Endothelial cell of umbilical vein (primary cell): ENCODE measurements at regions of chr10 and their contacts with region 1.

Region 1: DNA sequence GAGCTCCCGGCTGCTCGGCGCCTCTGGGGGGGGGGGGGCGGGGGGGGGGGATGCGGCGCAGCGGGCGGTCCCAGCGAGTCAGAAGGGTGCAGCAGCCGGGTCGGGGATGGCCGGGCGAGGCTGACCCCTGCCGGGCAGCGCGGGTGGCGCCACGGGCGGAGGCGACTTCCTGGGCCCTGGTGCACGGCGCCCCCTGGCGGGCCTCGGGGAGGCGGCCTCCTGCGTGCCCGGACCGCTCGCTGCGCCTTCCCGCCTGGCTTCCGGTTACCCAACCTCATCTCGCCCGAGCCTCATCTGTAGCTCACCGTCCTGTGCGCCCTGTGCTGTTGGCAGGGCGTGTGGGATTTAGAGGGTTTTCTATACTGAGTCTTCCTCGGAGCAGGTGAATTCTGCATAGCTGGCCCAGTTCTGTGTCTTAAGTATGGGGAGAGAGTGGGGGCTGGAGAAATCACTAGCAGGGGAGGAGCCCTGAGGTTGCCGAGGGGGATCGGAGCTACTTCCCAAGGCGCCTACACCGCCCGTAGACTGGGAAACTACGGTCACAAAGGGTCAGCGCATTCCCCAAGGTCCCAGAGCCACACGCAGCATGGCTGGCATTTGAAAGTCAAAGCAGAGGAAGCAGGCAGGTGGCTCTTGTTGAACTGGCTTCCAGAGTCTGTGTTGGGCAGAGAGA is 28.3 kb upstream of the WDFY4 start:
- DNase-seq: peak; percentile 90
- H3K4me3 ChIP-seq: peak overlapping the region in 2 of 3 experiments; percentile 42 to 60
- H3K27ac ChIP-seq: peak overlapping the region; percentile 78
- H3K4me1 ChIP-seq: peaks cover 20% of the 10 kb centered on the region
- H3K27me3 ChIP-seq: peaks cover 0 to 4% of the 10 kb centered on the region in 2 experiments
- CTCF ChIP-seq: peak; percentile 94 to 99
- POLR2A ChIP-seq: no peak

Region 2: GRCh38 chr10:48306265-48306869 is 350.0 kb before region 1 on chr10 and contains the start of gene MAPK8:
- CTCF ChIA-PET with region 1: interaction called, 9 read pairs
- POLR2A ChIA-PET with region 1: no interaction called
- dilution Hi-C with region 1: no loop called
- intact Hi-C with region 1: loop called (anchors 1 kb)
- DNase-seq: peak; percentile 85
- H3K4me3 ChIP-seq: peak within 1 kb of the TSS; percentile 64 to 97 (median 80)
- H3K27ac ChIP-seq: peak within 1 kb of the TSS; percentile 76
- H3K4me1 ChIP-seq: peaks cover 29% of the 10 kb centered on the region
- H3K27me3 ChIP-seq: peaks cover 6% of the 10 kb centered on the region in 2 experiments
- CTCF ChIP-seq: no peak
- POLR2A ChIP-seq: peak; percentile 85
- total RNA-seq, gene MAPK8: 50.1 and 56.2 TPM in 2 replicates

Region 3: GRCh38 chr10:48444266-48444665 is 212.1 kb before region 1 on chr10:
- CTCF ChIA-PET with region 1: interaction called, 67 read pairs
- POLR2A ChIA-PET with region 1: no interaction called
- dilution Hi-C with region 1: no loop called
- intact Hi-C with region 1: loop called (anchors 1 kb)
- DNase-seq: peak; percentile 76
- H3K4me3 ChIP-seq: no peak overlapping the region
- H3K27ac ChIP-seq: no peak overlapping the region
- H3K4me1 ChIP-seq: peaks cover 5% of the 10 kb centered on the region
- H3K27me3 ChIP-seq: no peaks in the 10 kb centered on the region
- CTCF ChIP-seq: peak; percentile 29 to 58
- POLR2A ChIP-seq: no peak

Region 4: GRCh38 chr10:48551861-48552591 is 104.4 kb before region 1 on chr10:
- CTCF ChIA-PET with region 1: interaction called, 445 read pairs
- POLR2A ChIA-PET with region 1: no interaction called
- dilution Hi-C with region 1: no loop called
- intact Hi-C with region 1: loop called (anchors 1 kb)
- DNase-seq: peak; percentile 68
- H3K4me3 ChIP-seq: no peak overlapping the region
- H3K27ac ChIP-seq: peak overlapping the region; percentile 45
- H3K4me1 ChIP-seq: peaks cover 37% of the 10 kb centered on the region
- H3K27me3 ChIP-seq: no peaks in the 10 kb centered on the region
- CTCF ChIP-seq: peak; percentile 66 to 77
- POLR2A ChIP-seq: no peak

Region 5: DNA sequence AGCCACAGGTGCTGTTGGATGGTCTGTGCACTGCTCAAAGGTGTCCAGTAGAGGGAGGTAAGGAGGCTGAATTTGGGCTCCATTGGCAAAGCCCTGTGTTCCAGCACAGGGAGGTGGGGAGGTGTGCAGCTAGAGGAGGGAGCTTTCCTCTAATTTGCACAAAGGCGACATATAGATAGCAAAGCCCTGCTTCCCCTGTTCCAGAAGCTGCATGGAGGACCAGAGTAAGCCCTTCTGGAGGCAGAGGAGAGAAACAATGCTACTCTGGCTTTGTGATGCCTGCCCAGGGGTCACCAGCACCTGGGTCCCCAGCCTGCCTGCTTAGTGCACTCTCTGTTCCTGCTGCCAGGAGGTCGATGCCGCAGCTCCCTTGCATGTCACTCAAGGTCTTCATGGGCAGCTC is 48.1 kb before region 1 on chr10:
- CTCF ChIA-PET with region 1: interaction called, 251 read pairs
- POLR2A ChIA-PET with region 1: no interaction called
- dilution Hi-C with region 1: no loop called
- intact Hi-C with region 1: loop called (anchors 1 kb)
- DNase-seq: no peak
- H3K4me3 ChIP-seq: no peak overlapping the region
- H3K27ac ChIP-seq: peak overlapping the region; percentile 95
- H3K4me1 ChIP-seq: peaks cover 59% of the 10 kb centered on the region
- H3K27me3 ChIP-seq: no peaks in the 10 kb centered on the region
- CTCF ChIP-seq: peak; percentile 74 to 75
- POLR2A ChIP-seq: no peak

Region 6: DNA sequence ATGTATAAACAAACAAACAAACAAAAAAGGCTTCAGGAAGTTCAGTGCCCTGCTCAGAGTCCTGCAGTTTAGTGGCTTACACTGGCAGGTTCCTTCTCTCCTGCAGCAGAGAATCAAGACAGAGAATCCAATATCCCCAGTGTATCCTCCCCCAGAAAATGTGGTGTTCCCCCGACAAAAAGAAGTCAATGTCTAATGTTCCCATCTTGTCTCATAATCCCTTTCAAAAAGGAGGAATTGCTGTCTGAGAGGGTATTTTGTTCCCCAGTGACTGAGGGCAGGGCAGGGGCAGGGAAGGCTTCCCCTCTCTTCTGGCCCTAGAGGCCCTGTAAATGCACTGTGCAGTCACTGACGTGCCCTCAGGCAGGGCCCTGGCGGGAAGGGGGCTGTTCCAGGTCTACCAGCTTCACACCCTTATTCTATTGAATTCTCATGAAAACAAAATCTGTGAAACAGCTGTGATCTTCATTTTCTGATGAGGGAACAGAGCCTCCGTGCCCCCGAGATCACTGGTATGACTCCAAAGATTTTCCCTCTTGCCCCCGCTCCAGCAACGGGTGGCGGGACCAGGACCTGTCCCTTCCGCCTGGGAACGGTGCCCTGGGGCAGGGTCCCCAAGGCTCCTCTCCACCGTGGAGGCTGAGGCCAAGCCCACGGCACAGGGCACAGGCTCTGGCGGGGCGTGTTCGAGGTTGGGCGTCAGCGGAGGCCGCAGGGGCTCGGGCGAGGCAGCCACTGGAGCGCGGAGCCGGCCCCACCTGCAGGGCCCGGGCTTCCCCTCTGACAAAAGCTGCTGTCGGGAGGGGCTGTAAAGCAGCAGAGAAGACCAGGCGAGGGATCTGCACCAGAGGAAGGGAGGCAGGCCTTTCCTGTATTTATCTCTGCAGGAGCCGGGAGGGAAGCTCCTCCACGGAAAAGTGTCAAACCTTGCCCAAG is 14.9 kb after region 1 on chr10:
- CTCF ChIA-PET with region 1: no interaction called
- POLR2A ChIA-PET with region 1: no interaction called
- dilution Hi-C with region 1: no loop called
- intact Hi-C with region 1: no loop called
- DNase-seq: no peak
- H3K4me3 ChIP-seq: no peak overlapping the region
- H3K27ac ChIP-seq: no peak overlapping the region
- H3K4me1 ChIP-seq: no peaks in the 10 kb centered on the region
- H3K27me3 ChIP-seq: peaks cover 0 to 10% of the 10 kb centered on the region in 2 experiments
- CTCF ChIP-seq: no peak
- POLR2A ChIP-seq: no peak

Region 7: GRCh38 chr10:48691812-48692528 is 35.6 kb after region 1 on chr10:
- CTCF ChIA-PET with region 1: no interaction called
- POLR2A ChIA-PET with region 1: no interaction called
- dilution Hi-C with region 1: no loop called
- intact Hi-C with region 1: no loop called
- DNase-seq: no peak
- H3K4me3 ChIP-seq: no peak overlapping the region
- H3K27ac ChIP-seq: no peak overlapping the region
- H3K4me1 ChIP-seq: no peaks in the 10 kb centered on the region
- H3K27me3 ChIP-seq: peaks cover 3% of the 10 kb centered on the region in 2 experiments
- CTCF ChIP-seq: no peak
- POLR2A ChIP-seq: no peak

Region 8: DNA sequence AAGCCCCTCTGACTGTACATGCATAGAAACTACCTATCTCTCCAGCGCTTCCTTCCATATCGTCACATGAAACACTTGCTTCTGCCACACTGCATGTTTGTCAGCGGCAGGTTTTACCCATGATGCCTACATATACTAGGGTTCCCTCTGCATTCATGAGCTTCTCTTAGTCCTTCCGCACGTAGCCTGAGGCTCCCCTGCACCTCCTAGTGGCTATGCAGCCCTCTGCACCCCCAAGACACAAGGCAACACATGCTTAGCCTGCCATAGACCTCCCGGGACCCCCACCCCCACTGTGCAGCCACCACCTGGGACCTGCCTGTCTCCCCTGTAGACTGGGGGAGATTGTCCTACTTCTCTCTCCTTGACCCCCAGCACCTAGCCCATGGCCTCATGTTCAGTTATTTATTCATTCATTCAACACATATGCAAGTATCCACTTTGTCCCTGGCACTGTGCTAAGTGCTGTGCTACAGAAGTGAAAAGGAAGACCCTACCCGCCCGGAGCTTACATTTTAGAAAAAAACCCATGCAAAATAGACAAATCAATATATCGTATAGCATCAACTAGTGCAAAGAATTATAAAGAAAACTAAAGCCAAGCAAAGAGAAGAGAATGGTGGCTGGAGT is 508.3 kb after region 1 on chr10:
- CTCF ChIA-PET with region 1: interaction called, 49 read pairs
- POLR2A ChIA-PET with region 1: no interaction called
- dilution Hi-C with region 1: no loop called
- intact Hi-C with region 1: loop called (anchors 1 kb)
- DNase-seq: peak; percentile 56
- H3K4me3 ChIP-seq: no peak overlapping the region
- H3K27ac ChIP-seq: no peak overlapping the region
- H3K4me1 ChIP-seq: no peaks in the 10 kb centered on the region
- H3K27me3 ChIP-seq: no peaks in the 10 kb centered on the region
- CTCF ChIP-seq: peak; percentile 52 to 81
- POLR2A ChIP-seq: no peak